Activated naive CD4-positive, alpha-beta T cell treated with anti-CD3 and anti-CD28 coated beads for 36 hours (primary cell): ENCODE measurements at regions of chr14 and their contacts with region 1.

Region 1: DNA sequence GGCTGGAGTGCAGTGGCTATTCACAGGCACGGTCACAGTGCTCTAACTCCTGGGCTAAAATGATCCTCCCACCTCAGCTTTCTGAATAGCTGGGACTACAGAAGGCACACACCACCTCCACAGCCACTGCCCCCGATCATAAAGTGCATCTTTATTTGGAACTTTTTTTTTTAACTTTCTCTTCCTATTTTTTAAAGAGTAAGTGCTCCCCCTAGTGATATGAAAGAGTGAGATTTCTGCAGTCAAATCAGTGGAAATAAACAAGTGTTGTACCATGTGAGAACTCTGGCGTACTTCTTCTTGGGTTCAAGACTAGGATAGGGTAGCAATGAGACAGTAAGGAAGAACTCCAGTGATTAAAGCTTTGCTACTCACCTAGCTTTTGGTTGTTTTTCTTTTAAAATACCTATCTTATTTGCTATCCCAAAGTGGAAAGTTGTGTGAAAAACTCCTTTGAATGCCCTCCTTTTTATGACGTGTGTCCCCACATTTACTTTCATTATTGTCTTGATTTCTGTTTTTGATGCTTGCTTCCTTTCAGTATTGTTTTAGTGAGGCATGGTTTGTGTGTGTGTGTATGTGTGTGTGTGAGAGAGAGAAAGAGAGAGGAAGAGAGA is 6.6 kb downstream of the PPP4R4 start:
- DNase-seq: no peak
- H3K4me3 Mint-ChIP-seq: peak overlapping the region; percentile 31
- H3K27ac Mint-ChIP-seq: peak overlapping the region; percentile 9
- H3K4me1 Mint-ChIP-seq: peaks cover 45% of the 10 kb centered on the region
- H3K27me3 Mint-ChIP-seq: no peaks in the 10 kb centered on the region

Region 2: GRCh38 chr14:94052662-94053061 is 128.1 kb before region 1 on chr14:
- CTCF ChIA-PET with region 1: no interaction called
- intact Hi-C with region 1: no loop called
- DNase-seq: no peak
- H3K4me3 Mint-ChIP-seq: no peak overlapping the region
- H3K27ac Mint-ChIP-seq: peak overlapping the region; percentile 70
- H3K4me1 Mint-ChIP-seq: peaks cover 15% of the 10 kb centered on the region
- H3K27me3 Mint-ChIP-seq: no peaks in the 10 kb centered on the region

Region 3: GRCh38 chr14:94213021-94213420 is 32.3 kb after region 1 on chr14:
- CTCF ChIA-PET with region 1: no interaction called
- intact Hi-C with region 1: no loop called
- DNase-seq: no peak
- H3K4me3 Mint-ChIP-seq: no peak overlapping the region
- H3K27ac Mint-ChIP-seq: no peak overlapping the region
- H3K4me1 Mint-ChIP-seq: no peaks in the 10 kb centered on the region
- H3K27me3 Mint-ChIP-seq: peaks cover 6% of the 10 kb centered on the region

Region 4: GRCh38 chr14:94307410-94307992 is 126.7 kb after region 1 on chr14:
- CTCF ChIA-PET with region 1: no interaction called
- intact Hi-C with region 1: loop called (anchors 5 kb)
- DNase-seq: no peak
- H3K4me3 Mint-ChIP-seq: no peak overlapping the region
- H3K27ac Mint-ChIP-seq: no peak overlapping the region
- H3K4me1 Mint-ChIP-seq: no peaks in the 10 kb centered on the region
- H3K27me3 Mint-ChIP-seq: peaks cover 15% of the 10 kb centered on the region

Region 5: GRCh38 chr14:94548999-94549985 is 368.5 kb after region 1 on chr14:
- CTCF ChIA-PET with region 1: no interaction called
- intact Hi-C with region 1: no loop called
- DNase-seq: peak; percentile 75
- H3K4me3 Mint-ChIP-seq: no peak overlapping the region
- H3K27ac Mint-ChIP-seq: no peak overlapping the region
- H3K4me1 Mint-ChIP-seq: no peaks in the 10 kb centered on the region
- H3K27me3 Mint-ChIP-seq: peaks cover 26% of the 10 kb centered on the region